ENCODE measurements at regions of chr3 and their contacts with region 1.

Region 1: DNA sequence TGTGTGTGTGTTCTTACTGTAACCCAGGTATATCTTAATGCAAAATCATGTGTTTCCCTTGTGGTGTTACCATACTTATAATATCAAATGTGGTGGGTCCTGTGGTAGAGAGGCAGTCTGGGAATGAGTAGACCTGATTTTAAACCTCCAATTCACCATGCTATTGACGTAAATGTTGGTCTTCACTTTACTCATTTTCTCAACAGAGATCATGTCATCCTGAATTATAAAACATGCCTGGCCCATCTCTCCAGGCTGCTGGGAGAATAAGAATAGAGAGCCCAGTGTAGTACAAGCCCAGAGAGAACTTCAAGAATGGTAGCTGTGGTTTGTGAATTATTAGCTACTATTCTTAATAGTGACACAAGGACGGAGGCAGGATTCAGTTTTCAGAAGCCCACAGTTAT is 88.1 kb downstream of the MBNL1 start:
- DNase-seq: peak; percentile 50
- H3K4me3 Mint-ChIP-seq: no peak overlapping the region
- H3K27ac Mint-ChIP-seq: peak overlapping the region; percentile 44
- H3K4me1 Mint-ChIP-seq: peaks cover 76% of the 10 kb centered on the region
- H3K27me3 Mint-ChIP-seq: no peaks in the 10 kb centered on the region

Region 2: DNA sequence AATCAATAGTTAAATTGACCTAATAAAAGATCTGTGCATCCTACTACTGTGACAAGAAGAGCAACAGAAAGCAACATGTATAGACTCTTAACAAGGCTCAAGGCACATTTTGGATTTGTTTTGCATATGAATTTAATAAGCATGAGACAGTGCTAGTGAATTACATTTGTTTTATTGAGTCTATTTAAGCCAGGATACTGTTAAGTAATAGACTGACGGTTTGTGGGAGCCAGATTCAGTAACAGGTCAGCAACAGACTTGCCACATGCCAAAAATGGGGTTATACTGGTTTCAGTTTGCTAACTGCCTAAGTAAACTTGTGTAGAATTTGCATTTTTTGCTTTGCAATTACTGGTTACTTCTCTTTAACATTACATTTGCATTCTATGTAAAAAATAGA is 34.1 kb before region 1 on chr3:
- CTCF ChIA-PET with region 1: no interaction called
- POLR2A ChIA-PET with region 1: interaction called, 3 read pairs
- intact Hi-C with region 1: loop called (anchors 5 kb)
- DNase-seq: no peak
- H3K4me3 Mint-ChIP-seq: no peak overlapping the region
- H3K27ac Mint-ChIP-seq: peak overlapping the region; percentile 24
- H3K4me1 Mint-ChIP-seq: peaks cover 82% of the 10 kb centered on the region
- H3K27me3 Mint-ChIP-seq: no peaks in the 10 kb centered on the region

Region 3: DNA sequence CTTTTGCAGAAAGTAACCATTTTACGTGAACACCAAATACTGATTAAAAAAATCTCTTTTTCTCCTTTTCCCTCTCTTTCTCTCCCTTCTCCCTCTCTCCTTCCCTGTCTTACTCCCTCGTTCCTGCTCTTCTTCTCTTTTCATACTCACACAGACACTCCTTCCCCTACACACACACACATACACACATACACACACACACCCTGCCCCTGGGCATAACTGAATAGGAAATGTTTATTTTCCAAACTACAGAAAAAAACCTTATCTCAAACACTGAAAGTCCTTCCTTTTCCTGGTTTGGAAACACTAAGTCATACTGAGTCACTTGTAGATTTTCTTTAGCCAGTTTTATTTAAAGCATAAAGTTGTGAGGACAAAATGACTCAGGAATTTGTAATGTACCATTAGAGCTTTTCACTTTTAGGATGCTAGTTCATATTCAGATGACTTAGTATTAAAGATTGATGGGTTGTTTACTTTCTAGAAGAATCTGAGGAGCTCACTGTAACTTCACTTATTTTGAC is 25.8 kb before region 1 on chr3:
- CTCF ChIA-PET with region 1: interaction called, 4 read pairs
- POLR2A ChIA-PET with region 1: interaction called, 3 read pairs
- intact Hi-C with region 1: loop called (anchors 2 kb)
- DNase-seq: no peak
- H3K4me3 Mint-ChIP-seq: no peak overlapping the region
- H3K27ac Mint-ChIP-seq: peak overlapping the region; percentile 66
- H3K4me1 Mint-ChIP-seq: peaks cover 87% of the 10 kb centered on the region
- H3K27me3 Mint-ChIP-seq: no peaks in the 10 kb centered on the region

Region 4: DNA sequence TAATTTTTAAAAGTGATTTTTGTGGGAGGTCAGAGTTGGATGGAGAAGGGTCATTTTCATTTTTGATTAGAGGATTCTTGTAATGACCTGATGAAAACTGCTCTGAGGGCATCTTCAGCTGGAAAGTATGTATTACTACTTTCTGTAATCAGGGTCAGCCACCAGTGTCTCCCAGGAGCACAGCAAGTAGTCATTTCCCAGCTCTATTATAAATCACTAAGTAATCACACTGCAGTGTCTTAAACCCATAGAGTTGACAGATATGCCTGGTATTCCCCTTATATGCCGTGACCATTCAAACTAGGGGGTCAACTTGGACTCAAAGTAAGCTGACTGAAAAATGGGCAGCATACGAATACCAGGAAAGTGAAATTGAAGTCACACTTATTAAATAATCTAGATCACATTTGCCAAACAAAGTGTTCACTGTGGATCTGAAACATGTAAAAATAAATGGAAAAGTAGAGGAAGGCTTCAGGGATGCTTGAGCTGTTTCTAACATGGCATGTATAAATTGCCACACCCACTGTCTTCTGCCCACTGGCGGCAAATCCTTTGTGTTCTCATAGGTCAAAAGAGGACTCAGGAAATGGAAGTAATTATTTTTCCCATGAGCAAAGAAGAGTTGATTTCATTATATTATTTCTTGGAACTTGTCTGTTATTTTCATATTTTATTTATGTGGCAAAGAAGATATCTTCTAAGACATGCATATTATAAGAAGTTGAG is 17.6 kb after region 1 on chr3:
- CTCF ChIA-PET with region 1: no interaction called
- POLR2A ChIA-PET with region 1: no interaction called
- intact Hi-C with region 1: loop called (anchors 2 kb)
- DNase-seq: no peak
- H3K4me3 Mint-ChIP-seq: no peak overlapping the region
- H3K27ac Mint-ChIP-seq: peak overlapping the region; percentile 11
- H3K4me1 Mint-ChIP-seq: peaks cover 82% of the 10 kb centered on the region
- H3K27me3 Mint-ChIP-seq: no peaks in the 10 kb centered on the region

Region 5: DNA sequence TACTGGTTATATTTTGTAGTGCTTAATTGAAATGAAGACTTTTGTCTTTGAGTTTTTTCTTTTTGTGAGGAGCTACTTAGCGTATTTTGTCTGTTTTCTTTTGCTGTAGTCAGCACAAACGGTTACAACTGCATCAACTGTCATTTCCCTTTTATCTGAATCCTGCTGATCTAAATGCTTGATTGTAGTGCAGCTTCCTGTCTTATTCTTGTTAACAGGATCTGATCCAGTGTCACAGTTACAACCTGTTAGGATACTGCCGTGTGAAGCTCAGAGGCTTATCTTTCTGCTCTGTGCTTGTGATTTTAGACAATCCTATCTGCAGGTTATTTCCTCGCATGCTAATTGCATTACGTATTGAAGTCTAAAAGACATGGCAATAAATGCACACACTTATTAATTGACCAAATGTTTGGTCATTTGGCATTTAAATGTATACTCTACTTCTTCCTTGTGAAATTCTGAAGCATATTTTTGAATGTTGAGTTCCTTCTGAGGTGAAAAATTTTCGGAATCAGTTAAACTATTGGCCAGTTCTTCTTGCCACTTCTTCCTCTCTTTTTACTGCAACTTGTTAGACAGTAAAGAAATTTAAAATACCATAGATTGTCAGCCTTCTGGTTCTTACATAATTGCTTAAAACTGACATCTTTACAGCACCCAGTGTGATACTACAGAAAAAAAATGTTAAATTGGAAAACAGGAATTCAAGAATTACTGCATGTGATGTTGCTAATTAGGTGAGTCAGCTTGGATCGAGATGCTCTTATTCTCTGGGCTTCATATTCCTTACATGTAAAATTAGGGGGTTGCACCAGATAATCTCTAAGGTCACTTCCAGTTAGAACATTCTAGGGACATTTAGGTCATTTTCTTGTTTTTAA is 80.1 kb after region 1 on chr3:
- CTCF ChIA-PET with region 1: no interaction called
- POLR2A ChIA-PET with region 1: no interaction called
- intact Hi-C with region 1: loop called (anchors 5 kb)
- DNase-seq: no peak
- H3K4me3 Mint-ChIP-seq: no peak overlapping the region
- H3K27ac Mint-ChIP-seq: peak overlapping the region; percentile 78
- H3K4me1 Mint-ChIP-seq: peaks cover 63% of the 10 kb centered on the region
- H3K27me3 Mint-ChIP-seq: no peaks in the 10 kb centered on the region

Measured in activated CD4-positive, alpha-beta memory T cell treated with anti-CD3 and anti-CD28 coated beads for 36 hours (primary cell).